Tibial artery (tissue), 4 donors: ENCODE measurements at regions of chr17 and their contacts with region 1.

Region 1: GRCh38 chr17:62703775-62704378 is 76.4 kb downstream of the MRC2 start:
- DNase-seq: peak; percentile 58 to 79
- H3K4me3 ChIP-seq: peak overlapping the region; percentile 54 to 60
- H3K27ac ChIP-seq: peak overlapping the region in 1 of 2 donors; percentile 39
- H3K4me1 ChIP-seq: peaks cover 0 to 29% (median 11%) of the 10 kb centered on the region in 4 donors
- H3K27me3 ChIP-seq: peaks cover 0 to 34% of the 10 kb centered on the region in 2 donors
- CTCF ChIP-seq: peak; percentile 75 to 82

Region 2: GRCh38 chr17:62791751-62792445 is 88.0 kb after region 1 on chr17:
- intact Hi-C with region 1: no loop called
- DNase-seq: no peak
- H3K4me3 ChIP-seq: no peak overlapping the region
- H3K27ac ChIP-seq: no peak overlapping the region
- H3K4me1 ChIP-seq: no peaks in the 10 kb centered on the region
- H3K27me3 ChIP-seq: no peaks in the 10 kb centered on the region
- CTCF ChIP-seq: no peak

Region 3: DNA sequence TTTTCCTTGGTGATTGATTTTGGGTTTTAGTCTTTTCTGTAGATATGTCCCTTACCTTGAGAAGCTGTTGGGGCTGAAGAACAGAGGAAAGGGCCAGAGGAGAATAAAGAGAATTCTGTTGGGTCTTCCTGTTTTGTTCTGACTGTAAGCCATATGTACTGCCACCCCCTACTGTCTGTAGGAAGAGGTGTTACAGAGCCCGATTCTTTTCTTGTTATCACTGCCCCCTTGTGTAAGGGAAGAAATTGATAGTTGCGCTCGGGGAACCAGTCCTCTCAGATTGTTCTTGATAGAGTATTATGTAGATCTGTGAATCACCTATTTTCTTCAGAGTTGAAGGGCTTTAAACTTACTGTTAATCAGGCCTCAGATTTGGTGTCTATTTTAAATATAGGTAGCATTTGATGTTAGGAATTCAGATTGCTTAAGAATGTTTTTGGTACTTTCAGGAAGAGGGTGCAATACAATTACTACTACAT is 264.6 kb after region 1 on chr17:
- intact Hi-C with region 1: loop called (anchors 5 kb)
- DNase-seq: peak in 1 of 2 donors; percentile 29
- H3K4me3 ChIP-seq: no peak overlapping the region
- H3K27ac ChIP-seq: no peak overlapping the region
- H3K4me1 ChIP-seq: peaks cover 0 to 20% (median 15%) of the 10 kb centered on the region in 4 donors
- H3K27me3 ChIP-seq: no peaks in the 10 kb centered on the region
- CTCF ChIP-seq: peak; percentile 63 to 76

Region 4: GRCh38 chr17:63406689-63407330 is 702.9 kb after region 1 on chr17:
- intact Hi-C with region 1: loop called (anchors 2 kb)
- DNase-seq: peak in 1 of 2 donors; percentile 78
- H3K4me3 ChIP-seq: no peak overlapping the region
- H3K27ac ChIP-seq: no peak overlapping the region
- H3K4me1 ChIP-seq: no peaks in the 10 kb centered on the region
- H3K27me3 ChIP-seq: no peaks in the 10 kb centered on the region
- CTCF ChIP-seq: peak; percentile 81 to 85